Activated T-helper 1 cell treated with anti-CD3 and anti-CD28 coated beads, Interleukin-12 subunit alpha, Interleukin-12 subunit beta, Interleukin-2, Interleukin-4 antibody, amounts not matched to agents 30 ng/mL and 10 ng/mL and 1 ng/mL, durations not matched to agents 14 hours and 24 hours and 36 hours (primary cell): ENCODE measurements at regions of chr7 and their contacts with region 1.

Region 1: DNA sequence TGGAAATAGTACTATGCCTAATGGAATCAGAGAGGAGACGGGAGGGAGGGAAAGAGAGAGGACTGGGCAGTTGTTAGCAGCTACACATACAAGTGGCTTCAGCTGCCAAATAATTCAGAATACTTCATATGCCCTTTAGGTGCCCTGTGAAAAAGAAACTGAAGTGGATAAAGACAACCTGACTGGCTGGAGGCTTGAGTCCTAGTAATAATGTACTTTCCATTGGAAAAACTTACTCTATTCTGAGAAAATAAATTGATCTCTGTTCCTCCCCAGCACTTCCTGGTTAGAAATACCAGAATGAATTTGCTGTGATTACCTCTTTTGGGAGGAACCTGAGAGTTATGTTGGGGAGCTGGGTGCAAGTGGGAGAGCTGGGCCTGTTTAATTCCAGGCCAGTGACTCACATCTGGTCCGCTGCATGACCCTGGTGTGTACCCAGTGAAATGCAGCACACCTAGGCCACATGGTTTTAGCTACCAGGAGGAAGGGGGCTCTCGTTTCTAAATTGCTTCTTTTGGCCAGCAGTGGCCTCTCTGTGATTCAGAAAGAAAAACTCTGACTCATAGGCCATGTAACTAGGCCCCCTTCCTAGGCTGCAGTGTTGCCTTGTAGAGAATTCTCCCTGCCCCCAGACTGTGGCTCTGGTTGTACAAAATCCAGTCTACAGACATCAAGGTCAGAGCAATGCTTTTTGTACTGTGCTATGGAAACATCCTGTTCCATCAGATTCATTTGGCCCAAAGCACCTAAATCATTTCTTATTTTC is 6.5 kb downstream of the AGFG2 start:
- DNase-seq: peak; percentile 25
- H3K4me3 Mint-ChIP-seq: peak overlapping the region; percentile 80
- H3K27ac Mint-ChIP-seq: peak overlapping the region; percentile 100
- H3K4me1 Mint-ChIP-seq: peaks cover 98% of the 10 kb centered on the region
- H3K27me3 Mint-ChIP-seq: no peaks in the 10 kb centered on the region

Region 2: DNA sequence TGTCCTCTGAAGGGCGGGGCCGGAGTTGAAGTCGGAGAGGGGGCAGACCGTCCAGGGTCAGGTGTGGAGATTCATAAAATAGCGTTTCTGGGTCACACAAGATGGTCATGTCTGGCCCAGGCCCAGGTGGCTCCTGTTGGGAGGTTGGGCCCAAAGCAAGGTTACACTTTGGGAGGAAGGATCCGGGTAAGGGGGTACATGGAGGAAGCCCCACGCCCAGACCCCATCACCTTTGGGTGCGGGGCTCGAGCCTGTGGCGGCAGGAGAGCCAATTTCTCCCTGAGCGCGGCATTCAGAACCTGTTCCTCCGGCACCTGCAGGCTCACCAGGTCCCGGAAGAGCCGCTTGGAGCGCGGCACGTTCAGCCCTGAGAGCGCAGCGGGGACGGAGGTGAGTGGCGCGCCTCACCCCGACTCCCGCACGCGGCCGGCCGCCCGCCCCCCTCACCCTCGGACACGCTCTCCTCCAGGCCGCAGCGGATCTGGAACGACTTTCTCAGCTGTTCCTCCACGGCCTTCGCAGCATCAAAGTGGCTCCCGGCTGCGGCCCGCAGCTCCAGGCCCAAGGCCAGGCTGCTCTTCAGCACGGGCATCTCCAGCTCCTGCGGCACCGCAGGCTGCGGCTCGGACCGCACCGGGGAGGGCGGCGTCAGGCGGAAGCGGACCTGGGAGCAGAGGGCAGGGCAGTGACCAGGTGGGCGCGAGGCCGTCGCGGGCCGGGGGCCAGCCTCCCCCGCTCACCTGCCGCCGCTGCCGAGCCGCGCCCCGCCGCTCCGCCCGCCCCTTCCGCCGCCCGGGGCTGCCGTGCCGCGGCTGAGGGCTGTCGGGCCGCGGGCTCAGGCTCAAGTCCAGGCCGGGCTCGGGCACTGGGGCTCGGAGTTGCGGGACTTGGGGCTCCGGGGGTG is 109.9 kb before region 1 on chr7:
- intact Hi-C with region 1: loop called (anchors 1 kb)
- DNase-seq: peak; percentile 42
- H3K4me3 Mint-ChIP-seq: peak overlapping the region; percentile 94
- H3K27ac Mint-ChIP-seq: peak overlapping the region; percentile 88
- H3K4me1 Mint-ChIP-seq: peaks cover 41% of the 10 kb centered on the region
- H3K27me3 Mint-ChIP-seq: no peaks in the 10 kb centered on the region

Region 3: DNA sequence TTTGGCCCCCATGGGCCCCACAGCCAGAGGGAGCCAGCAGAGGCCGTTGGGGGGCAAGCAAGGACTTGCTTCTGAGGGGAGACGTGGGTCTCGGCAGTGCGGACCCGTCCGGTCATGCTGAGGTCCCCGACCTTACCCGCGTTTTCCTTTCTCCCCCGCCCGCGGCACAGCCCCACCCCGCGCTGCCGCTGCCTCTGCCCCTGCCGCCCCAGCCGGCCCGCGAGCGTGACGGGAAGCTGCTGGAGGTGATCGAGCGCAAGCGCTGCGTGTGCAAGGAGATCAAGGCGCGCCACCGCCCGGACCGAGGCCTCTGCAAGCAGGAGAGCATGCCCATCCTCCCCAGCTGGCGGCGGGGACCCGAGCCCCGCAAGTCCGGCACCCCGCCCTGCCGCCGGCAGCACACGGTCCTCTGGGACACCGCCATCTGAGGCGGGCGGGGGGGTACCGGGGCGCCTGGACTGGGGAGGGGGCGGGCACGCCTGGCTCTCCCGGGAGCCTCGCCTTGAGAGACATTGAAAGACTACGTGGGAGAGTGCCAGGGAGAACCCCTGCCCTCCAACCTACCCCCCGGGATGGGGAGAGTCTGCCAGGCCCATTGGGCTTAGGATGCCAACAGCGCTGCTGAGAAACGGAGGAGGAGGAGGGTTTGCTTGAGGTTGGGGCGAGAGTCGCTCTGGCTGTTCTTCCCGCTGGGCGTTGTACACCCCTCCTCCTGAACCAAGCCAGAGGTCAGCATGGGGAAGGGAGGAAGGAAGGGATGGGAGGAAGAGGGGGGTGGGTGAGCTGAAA is 51.9 kb before region 1 on chr7:
- intact Hi-C with region 1: loop called (anchors 2 kb)
- DNase-seq: peak; percentile 41
- H3K4me3 Mint-ChIP-seq: peak overlapping the region; percentile 61
- H3K27ac Mint-ChIP-seq: no peak overlapping the region
- H3K4me1 Mint-ChIP-seq: peaks cover 8% of the 10 kb centered on the region
- H3K27me3 Mint-ChIP-seq: peaks cover 18% of the 10 kb centered on the region

Region 4: DNA sequence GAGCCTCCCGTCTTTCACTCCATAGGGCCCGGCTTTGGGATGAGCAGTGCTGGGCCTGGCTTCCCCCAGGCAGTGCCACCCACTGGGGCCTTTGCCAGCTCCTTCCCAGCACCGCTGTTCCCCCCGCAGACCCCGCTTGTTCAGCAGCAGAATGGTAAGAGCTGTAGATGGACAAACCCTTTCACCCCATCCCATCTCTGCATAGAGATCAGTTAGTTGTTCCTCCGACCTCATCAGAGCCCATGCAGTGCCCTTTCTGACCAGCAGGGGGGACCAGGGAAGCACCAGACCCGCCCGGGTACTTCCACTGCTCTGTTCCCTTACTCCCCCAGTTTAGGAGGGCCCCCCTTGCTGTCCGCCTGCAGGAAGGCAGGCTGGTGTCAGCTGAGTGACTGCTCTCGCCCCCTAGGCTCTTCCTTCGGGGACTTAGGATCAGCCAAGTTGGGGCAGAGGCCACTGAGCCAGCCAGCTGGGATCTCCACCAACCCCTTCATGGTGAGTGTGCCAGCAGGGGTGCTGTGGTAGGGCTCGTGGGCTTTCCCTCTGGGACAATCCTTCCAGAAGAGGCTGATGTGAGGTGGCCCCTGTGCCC is 18.4 kb after region 1 on chr7:
- intact Hi-C with region 1: loop called (anchors 1 kb)
- DNase-seq: peak; percentile 69
- H3K4me3 Mint-ChIP-seq: no peak overlapping the region
- H3K27ac Mint-ChIP-seq: peak overlapping the region; percentile 24
- H3K4me1 Mint-ChIP-seq: peaks cover 33% of the 10 kb centered on the region
- H3K27me3 Mint-ChIP-seq: no peaks in the 10 kb centered on the region

Region 5: GRCh38 chr7:100626530-100627237 is 81.1 kb after region 1 on chr7:
- intact Hi-C with region 1: loop called (anchors 1 kb)
- DNase-seq: peak; percentile 79
- H3K4me3 Mint-ChIP-seq: peak overlapping the region; percentile 71
- H3K27ac Mint-ChIP-seq: peak overlapping the region; percentile 63
- H3K4me1 Mint-ChIP-seq: peaks cover 45% of the 10 kb centered on the region
- H3K27me3 Mint-ChIP-seq: no peaks in the 10 kb centered on the region